WTC11 (cell line): ENCODE measurements at regions of chr2 and their contacts with region 1.

Region 1: DNA sequence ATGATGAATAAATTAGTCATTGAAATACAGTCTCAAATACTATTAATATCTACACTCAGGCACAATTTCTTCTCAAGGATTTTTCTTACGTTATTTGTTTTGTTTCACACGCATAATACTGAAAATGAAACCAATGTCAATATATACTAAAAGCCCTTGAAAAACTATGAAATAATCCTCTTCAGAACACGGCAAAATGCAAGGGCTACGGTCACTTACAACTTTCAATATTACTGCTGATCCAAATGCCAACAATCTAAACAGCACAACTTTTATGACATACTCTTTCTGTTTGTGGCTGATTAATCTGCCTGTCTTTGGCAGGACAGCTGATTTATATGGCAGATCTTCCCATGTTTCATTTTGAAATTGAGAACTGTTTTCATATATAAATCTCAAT is 68.3 kb downstream of the LRPPRC start:
- DNase-seq: no peak
- ATAC-seq: no peak
- H3K4me3 Mint-ChIP-seq: no peak overlapping the region
- H3K27ac Mint-ChIP-seq: no peak overlapping the region
- H3K4me1 Mint-ChIP-seq: no peaks in the 10 kb centered on the region
- H3K27me3 Mint-ChIP-seq: no peaks in the 10 kb centered on the region
- CTCF ChIP-seq: no peak

Region 2: GRCh38 chr2:43874776-43875451 is 52.5 kb before region 1 on chr2:
- CTCF ChIA-PET with region 1: no interaction called
- POLR2A ChIA-PET with region 1: no interaction called
- DNase-seq: no peak
- ATAC-seq: peak; percentile 17; the same call in 1 of the 2 replicates
- H3K4me3 Mint-ChIP-seq: no peak overlapping the region
- H3K27ac Mint-ChIP-seq: no peak overlapping the region
- H3K4me1 Mint-ChIP-seq: peaks cover 2% of the 10 kb centered on the region
- H3K27me3 Mint-ChIP-seq: peaks cover 18% of the 10 kb centered on the region
- CTCF ChIP-seq: no peak

Region 3: DNA sequence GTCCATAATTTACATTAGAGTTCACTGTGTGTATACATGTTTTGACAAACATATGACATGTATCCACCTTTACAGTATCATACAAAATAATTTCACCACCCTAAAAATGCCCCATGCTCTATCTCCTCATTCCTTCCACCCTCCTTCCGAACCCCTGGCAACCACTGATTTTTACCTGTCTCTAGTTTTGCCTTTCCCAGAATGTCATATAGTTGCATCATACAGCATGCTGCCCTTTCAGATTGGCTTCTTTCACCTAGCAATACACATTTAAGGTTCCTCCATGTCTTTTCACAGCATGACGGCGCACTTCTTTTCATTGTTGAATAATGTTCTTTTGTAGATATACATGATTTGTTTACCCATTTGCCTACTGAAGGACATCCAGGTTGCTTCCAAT is 57.9 kb after region 1 on chr2:
- CTCF ChIA-PET with region 1: no interaction called
- POLR2A ChIA-PET with region 1: interaction called, 10 read pairs
- DNase-seq: no peak
- ATAC-seq: no peak
- H3K4me3 Mint-ChIP-seq: no peak overlapping the region
- H3K27ac Mint-ChIP-seq: peak overlapping the region; percentile 79
- H3K4me1 Mint-ChIP-seq: peaks cover 24% of the 10 kb centered on the region
- H3K27me3 Mint-ChIP-seq: no peaks in the 10 kb centered on the region; the same call in 1 of the 2 replicates
- CTCF ChIP-seq: no peak